ENCODE measurements at regions of chr7 and their contacts with region 1.

Region 1: GRCh38 chr7:120941064-120941463 is 9.5 kb upstream of the ING3 start:
- DNase-seq: no peak
- ATAC-seq: peak in 1 of 4 donors; percentile 50
- H3K4me3 ChIP-seq: no peak overlapping the region
- H3K27ac ChIP-seq: no peak overlapping the region
- H3K4me1 ChIP-seq: peaks cover 0 to 8% (median 0%) of the 10 kb centered on the region in 12 donors
- H3K27me3 ChIP-seq: no peaks in the 10 kb centered on the region
- CTCF ChIP-seq: peak in 9 of 12 donors; percentile 15 to 59 (median 53)
- POLR2A ChIP-seq: no peak

Region 2: DNA sequence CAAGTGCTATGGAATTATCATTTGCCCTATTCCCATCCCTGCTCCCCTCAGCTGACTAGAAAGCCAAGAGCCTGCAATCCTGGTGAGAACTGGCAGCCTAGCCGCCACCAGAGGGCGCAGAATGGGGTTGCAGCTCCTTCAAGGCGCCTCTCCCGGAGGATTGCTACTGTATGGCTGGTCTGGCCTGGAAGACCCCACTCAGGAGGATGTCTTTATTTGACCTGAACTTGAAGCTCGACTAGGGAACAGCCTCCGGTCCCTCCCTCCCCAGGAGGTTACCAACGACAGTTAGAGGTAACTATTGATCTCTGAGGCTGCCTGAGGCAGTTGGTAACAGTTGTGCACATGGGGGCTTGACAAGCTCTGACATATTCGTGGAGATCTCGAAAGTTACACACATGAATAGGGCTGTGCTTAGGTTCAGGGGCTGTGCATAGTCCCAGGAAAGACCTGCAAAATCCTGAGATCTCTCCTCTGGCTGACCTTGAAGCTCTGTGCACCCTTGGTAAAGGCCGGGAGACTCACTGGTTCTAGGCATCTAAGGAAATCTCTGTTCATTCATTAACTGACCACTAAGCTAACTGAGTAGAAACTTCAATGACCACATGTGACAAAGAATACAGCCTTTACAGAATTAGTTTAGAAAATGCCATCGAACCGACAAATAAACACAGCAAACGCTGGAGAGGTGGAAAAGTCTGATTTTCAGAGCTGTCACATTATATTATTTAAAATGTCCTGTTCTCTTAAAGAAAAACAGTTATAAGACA is 148.8 kb before region 1 on chr7:
- intact Hi-C with region 1: loop called in 2 of 10 experiments (anchors 5 kb)
- DNase-seq: peak; percentile 65 to 83 (median 78)
- ATAC-seq: peak in 3 of 4 donors; percentile 75 to 92 (median 89)
- H3K4me3 ChIP-seq: no peak overlapping the region
- H3K27ac ChIP-seq: no peak overlapping the region
- H3K4me1 ChIP-seq: peaks cover 0 to 27% (median 5%) of the 10 kb centered on the region in 12 donors
- H3K27me3 ChIP-seq: no peaks in the 10 kb centered on the region
- CTCF ChIP-seq: peak; percentile 65 to 90 (median 80)
- POLR2A ChIP-seq: no peak

Region 3: GRCh38 chr7:120799813-120800475 is 141.1 kb before region 1 on chr7:
- intact Hi-C with region 1: loop called in 5 of 10 experiments (anchors 2 to 5 kb)
- DNase-seq: no peak
- ATAC-seq: no peak
- H3K4me3 ChIP-seq: no peak overlapping the region
- H3K27ac ChIP-seq: no peak overlapping the region
- H3K4me1 ChIP-seq: peaks cover 0 to 15% (median 0%) of the 10 kb centered on the region in 12 donors
- H3K27me3 ChIP-seq: no peaks in the 10 kb centered on the region
- CTCF ChIP-seq: no peak
- POLR2A ChIP-seq: no peak